Mammary epithelial cell (primary cell): ENCODE measurements at regions of chr7 and their contacts with region 1.

Region 1: GRCh38 chr7:27662490-27663205 is at the start of gene HIBADH:
- DNase-seq: peak; percentile 99
- H3K4me3 ChIP-seq: peak within 1 kb of the TSS; percentile 82 to 94 (median 87)
- H3K27ac ChIP-seq: peak within 1 kb of the TSS; percentile 89
- H3K4me1 ChIP-seq: peaks cover 6% of the 10 kb centered on the region
- H3K27me3 ChIP-seq: no peaks in the 10 kb centered on the region
- CTCF ChIP-seq: no peak
- total RNA-seq, gene HIBADH: 26.0 to 42.3 TPM

Region 2: GRCh38 chr7:27611043-27611442 is 51.6 kb before region 1 on chr7:
- CTCF ChIA-PET with region 1: no interaction called
- dilution Hi-C with region 1: no loop called
- in situ Hi-C with region 1: no loop called
- intact Hi-C with region 1: loop called (anchors 5 kb)
- DNase-seq: peak; percentile 60
- H3K4me3 ChIP-seq: no peak overlapping the region
- H3K27ac ChIP-seq: no peak overlapping the region
- H3K4me1 ChIP-seq: peaks cover 11% of the 10 kb centered on the region
- H3K27me3 ChIP-seq: no peaks in the 10 kb centered on the region
- CTCF ChIP-seq: no peak

Region 3: DNA sequence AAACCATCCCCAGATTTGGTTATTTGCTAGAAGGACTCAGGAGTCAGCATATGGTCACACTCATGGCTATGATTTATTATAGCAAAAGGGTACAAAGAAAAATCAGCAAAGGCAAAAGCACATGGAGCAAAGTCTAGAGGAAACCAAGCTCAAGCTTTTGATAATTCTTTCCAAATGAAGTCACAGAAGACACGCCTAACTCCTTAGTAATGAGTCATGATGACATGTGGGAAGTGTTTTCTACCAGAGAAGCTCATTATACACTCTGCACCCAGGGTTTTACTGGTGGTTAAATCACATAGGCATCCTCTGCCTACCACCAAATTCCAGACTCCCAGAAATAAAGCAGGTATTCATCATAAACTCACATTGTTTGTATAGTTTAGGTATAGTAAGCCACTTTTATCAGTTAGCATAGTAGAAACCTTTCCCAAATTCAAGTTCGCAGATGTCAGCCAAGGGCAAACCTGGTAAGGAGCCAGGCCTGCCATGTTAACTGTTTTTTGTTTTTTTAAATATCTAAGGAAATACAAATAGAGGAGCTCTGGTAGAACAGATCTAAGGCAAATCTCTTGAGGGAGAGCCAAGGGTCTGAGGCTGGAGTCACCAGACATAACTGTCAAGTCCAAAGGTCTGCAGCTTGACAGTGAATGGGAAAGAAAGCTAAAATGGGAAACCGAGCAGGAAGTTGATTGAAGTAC is 15.4 kb after region 1 on chr7:
- CTCF ChIA-PET with region 1: interaction called, 9 read pairs
- dilution Hi-C with region 1: no loop called
- in situ Hi-C with region 1: no loop called
- intact Hi-C with region 1: loop called (anchors 1 kb)
- DNase-seq: peak; percentile 96
- H3K4me3 ChIP-seq: no peak overlapping the region
- H3K27ac ChIP-seq: peak overlapping the region; percentile 96
- H3K4me1 ChIP-seq: peaks cover 27% of the 10 kb centered on the region
- H3K27me3 ChIP-seq: no peaks in the 10 kb centered on the region
- CTCF ChIP-seq: no peak

Region 4: DNA sequence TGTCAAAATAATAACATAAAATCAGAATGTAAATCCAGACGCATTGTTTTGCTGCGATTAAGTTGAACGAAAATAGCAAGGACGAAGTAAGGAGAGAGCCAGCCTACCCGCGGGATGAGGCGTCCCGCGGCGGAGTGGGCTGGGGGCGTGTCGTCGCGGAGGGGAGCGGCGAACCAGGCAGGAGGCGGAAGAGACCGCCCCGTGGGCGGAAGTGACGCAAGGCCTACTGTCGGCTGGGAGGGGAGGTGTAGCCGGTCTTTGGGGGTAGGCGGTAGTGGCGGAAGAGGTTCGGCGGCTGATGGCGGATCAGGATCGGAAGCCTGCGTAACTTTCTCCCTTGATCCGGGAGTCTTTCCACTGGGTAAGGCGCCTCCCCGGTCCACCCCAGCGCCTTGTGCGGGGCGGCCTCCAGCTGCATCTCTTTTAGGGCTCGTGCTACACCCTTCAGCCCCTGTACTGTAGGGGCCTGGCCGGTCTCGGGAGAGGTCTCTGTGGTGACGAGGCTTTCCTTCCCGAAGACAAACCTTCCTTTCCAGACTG is 77.3 kb after region 1 on chr7 and contains the start of gene TAX1BP1:
- CTCF ChIA-PET with region 1: no interaction called
- dilution Hi-C with region 1: no loop called
- in situ Hi-C with region 1: no loop called
- intact Hi-C with region 1: loop called (anchors 1 kb)
- DNase-seq: peak; percentile 92
- H3K4me3 ChIP-seq: peak within 1 kb of the TSS; percentile 80 to 97 (median 96)
- H3K27ac ChIP-seq: peak within 1 kb of the TSS; percentile 96
- H3K4me1 ChIP-seq: peaks cover 11% of the 10 kb centered on the region
- H3K27me3 ChIP-seq: no peaks in the 10 kb centered on the region
- CTCF ChIP-seq: no peak
- total RNA-seq, gene TAX1BP1: 84.1 to 93.5 TPM

Region 5: GRCh38 chr7:28347475-28348318 is 685.0 kb after region 1 on chr7:
- CTCF ChIA-PET with region 1: no interaction called
- dilution Hi-C with region 1: no loop called
- in situ Hi-C with region 1: no loop called
- intact Hi-C with region 1: no loop called
- DNase-seq: peak; percentile 16
- H3K4me3 ChIP-seq: no peak overlapping the region
- H3K27ac ChIP-seq: no peak overlapping the region
- H3K4me1 ChIP-seq: peaks cover 17% of the 10 kb centered on the region
- H3K27me3 ChIP-seq: no peaks in the 10 kb centered on the region
- CTCF ChIP-seq: no peak